Right ventricle myocardium superior (tissue), 1 donor: ENCODE measurements at regions of chr13 and their contacts with region 1.

Region 1: DNA sequence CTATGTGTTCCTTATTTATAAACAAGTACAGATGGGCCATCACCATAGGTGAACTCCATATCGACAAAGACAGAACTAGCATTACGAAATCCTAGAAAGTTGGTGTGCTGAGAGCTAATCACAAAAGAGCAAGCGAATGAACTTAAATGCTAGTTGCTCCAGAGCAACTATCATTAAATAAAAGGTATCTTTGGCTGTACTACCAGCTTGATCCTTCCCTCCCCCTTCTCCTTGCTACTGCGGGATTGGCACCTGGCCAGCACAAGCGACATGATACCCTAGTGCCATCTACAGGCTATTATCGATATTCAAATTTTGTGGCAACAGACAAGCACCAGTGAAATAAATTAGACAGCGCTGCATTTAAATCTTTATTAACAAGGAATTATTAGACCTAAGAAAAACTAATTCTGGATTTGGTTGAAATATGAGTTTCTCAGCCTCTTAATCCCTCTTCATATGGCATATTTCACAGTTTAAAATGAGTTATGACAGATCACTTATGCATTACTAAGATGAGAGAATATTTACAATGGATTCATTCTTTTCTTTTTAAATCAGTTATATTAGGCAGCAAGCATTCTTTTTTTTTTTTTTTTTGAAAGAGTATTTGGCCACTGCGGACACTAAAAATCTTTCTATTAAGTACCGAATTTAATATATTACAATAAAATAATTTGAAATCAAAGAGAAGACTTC is 5.8 kb downstream of the PCDH9 start:
- DNase-seq: peak; percentile 85
- ATAC-seq: peak; percentile 90

Region 2: DNA sequence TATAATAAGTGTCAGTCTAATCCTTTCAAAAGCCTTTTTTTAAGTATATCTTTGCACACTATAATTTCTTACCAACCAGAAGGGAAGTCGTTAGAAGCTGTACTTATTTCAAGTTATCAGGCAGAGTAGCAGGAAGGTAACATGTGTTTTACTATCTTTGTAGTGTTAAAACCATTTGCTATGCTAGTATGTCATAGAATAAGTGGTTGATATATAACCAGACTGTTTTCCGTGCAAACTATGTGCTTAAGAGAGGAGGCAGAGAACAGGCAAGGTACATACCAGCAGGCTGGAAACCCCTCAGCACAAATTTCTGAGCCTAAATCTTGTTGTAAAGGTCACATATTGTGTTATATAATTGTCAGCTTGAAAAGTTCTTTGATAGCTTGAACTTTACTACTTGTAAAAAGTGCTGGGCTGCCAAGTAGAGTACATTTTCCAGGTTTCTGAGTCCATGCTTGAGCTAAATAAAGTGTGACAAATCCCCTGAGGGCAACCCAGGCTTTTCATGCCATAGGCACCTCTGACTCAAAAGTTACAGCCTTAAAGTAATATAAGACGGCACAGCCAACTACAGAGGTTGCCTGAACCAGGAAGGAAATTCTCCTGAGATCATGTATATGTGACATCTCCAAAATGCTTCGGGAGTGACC is 1291.6 kb before region 1 on chr13:
- intact Hi-C with region 1: loop called (anchors 10 kb)
- DNase-seq: no peak
- ATAC-seq: peak; percentile 27